Activated B cell treated with CpG ODN at 0.5 μM for 24 hours (primary cell): ENCODE measurements at regions of chr15 and their contacts with region 1.

Region 1: GRCh38 chr15:31228985-31229826 is 97.4 kb upstream of the KLF13 start:
- DNase-seq: peak; percentile 52
- ATAC-seq: peak; percentile 64
- H3K4me3 Mint-ChIP-seq: peak overlapping the region; percentile 85
- H3K27ac Mint-ChIP-seq: peak overlapping the region; percentile 98
- H3K4me1 Mint-ChIP-seq: peaks cover 96% of the 10 kb centered on the region
- H3K27me3 Mint-ChIP-seq: no peaks in the 10 kb centered on the region
- CTCF ChIP-seq: no peak

Region 2: DNA sequence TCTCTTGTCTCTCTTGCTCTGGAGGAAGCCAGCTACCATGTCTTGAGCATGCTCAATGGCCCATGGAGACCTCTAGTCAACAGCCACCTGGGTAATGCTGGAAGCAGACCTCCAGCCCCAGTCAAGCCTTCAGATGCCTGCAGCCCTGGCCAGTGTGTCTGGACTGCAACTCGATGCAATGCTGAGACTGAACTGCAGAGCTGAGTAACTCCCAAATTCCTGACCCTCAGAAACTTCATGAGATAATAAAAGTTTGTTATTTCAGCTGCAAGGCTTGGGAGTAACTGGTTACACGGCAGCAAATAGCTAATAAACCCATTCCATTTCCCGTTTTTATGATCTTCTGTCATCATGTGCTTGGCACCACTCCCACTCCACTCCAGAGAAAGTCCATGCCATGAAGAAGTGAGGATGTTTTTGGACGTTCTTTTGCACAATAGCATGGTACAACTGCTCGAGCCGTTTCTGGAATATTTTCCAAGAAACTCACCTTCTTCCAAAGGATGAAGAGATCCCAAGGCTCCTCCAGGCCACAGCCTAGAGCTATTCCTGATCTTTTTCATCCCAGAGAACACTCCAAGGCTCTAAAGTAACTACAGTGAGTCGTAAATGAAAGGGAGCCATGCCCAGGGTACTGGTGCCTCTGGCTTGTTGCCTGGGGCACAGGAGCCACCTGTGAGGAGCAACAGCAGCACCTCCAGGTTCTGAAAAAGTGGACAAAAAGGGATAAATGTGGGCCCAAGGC is 25.4 kb after region 1 on chr15:
- CTCF ChIA-PET with region 1: interaction called, 5 read pairs
- POLR2A ChIA-PET with region 1: interaction called, 68 read pairs
- intact Hi-C with region 1: no loop called
- DNase-seq: no peak
- ATAC-seq: no peak
- H3K4me3 Mint-ChIP-seq: no peak overlapping the region
- H3K27ac Mint-ChIP-seq: peak overlapping the region; percentile 77
- H3K4me1 Mint-ChIP-seq: peaks cover 44% of the 10 kb centered on the region
- H3K27me3 Mint-ChIP-seq: no peaks in the 10 kb centered on the region
- CTCF ChIP-seq: no peak

Region 3: GRCh38 chr15:31344823-31345605 is 115.8 kb after region 1 on chr15:
- CTCF ChIA-PET with region 1: no interaction called
- POLR2A ChIA-PET with region 1: interaction called, 6 read pairs
- intact Hi-C with region 1: loop called (anchors 2 kb)
- DNase-seq: peak; percentile 41
- ATAC-seq: peak; percentile 67
- H3K4me3 Mint-ChIP-seq: peak overlapping the region; percentile 88
- H3K27ac Mint-ChIP-seq: peak overlapping the region; percentile 91
- H3K4me1 Mint-ChIP-seq: peaks cover 100% of the 10 kb centered on the region
- H3K27me3 Mint-ChIP-seq: no peaks in the 10 kb centered on the region
- CTCF ChIP-seq: no peak